Activated B cell treated with CpG ODN at 0.5 μM for 24 hours (primary cell): ENCODE measurements at regions of chr2 and their contacts with region 1.

Region 1: DNA sequence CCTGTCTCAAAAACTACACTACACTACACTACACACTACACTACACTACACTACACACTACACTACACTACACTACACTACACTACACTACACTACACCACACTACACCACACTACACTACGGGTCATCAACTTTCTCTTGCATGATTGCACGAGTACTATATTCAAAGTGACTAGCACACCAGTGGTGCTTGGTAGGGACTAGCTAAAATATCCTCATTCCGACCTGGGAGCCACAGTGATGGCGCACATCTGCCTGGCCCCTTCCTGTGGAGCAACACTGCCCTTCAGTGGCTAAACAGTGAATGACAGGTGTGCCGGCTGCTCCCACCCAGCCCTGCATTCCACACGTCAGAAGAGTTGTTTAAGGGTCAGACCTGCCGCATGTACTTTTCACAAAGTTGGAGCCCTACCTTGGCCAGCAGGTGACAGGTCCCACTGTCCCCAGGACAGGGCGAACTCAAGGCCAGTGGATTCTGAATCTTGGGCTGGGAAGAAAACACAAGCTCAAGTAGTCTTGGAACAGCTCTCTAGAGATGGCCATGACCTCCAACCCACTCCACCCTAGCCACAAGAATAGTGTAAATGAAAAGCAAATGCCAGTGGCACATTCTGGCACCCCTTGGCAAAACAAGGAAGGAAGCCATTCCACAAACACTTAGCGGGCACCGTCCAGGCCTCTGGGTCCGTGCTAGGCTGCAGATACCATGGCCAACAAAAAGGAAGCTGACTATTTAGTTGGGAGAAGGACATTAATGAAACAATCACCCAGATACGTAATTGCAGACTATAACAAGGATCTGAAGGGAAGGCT is 79.7 kb upstream of the MSH2 start:
- DNase-seq: peak; percentile 73
- ATAC-seq: peak; percentile 99
- H3K4me3 Mint-ChIP-seq: no peak overlapping the region
- H3K27ac Mint-ChIP-seq: no peak overlapping the region
- H3K4me1 Mint-ChIP-seq: peaks cover 8% of the 10 kb centered on the region
- H3K27me3 Mint-ChIP-seq: no peaks in the 10 kb centered on the region
- CTCF ChIP-seq: no peak

Region 2: DNA sequence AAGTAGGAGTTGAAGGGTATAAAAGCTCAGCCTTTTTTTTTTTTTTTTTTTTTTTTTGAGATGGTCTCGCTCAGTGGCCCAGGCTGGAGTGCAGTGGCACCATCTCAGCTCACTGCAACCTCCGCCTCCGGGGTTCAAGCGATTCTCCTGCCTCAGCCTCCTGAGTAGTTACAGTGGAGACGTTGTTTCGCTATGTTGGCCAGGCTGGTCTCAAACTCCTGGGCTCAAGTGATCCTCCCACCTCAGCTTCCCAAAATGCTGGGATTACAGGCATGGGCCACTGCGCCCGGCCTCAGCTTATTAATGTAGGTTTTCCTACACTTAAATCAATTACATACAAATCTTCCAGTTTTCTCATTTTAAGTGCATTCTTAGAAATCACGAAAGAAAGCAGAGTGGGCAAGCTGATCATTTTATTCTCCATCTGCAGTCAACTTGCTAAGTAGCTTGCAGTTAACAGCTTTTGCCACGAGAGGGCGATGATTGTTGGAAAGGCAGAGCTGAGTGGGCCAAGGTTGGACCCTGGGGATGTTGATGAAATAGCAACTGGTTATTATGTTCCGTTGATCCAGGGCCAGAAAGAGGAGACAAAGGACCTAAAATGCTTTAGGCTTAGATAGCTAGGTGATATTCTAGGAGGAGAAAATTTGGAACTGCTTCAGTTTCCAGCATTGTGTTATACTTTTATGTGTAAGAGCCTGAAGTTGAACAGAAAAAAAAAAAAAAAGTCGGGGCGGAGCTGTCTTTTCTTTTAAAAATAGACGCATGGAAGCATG is 1260.4 kb before region 1 on chr2:
- CTCF ChIA-PET with region 1: interaction called, 3 read pairs
- POLR2A ChIA-PET with region 1: no interaction called
- intact Hi-C with region 1: loop called (anchors 5 kb)
- DNase-seq: peak; percentile 30
- ATAC-seq: peak; percentile 70
- H3K4me3 Mint-ChIP-seq: no peak overlapping the region
- H3K27ac Mint-ChIP-seq: no peak overlapping the region
- H3K4me1 Mint-ChIP-seq: no peaks in the 10 kb centered on the region
- H3K27me3 Mint-ChIP-seq: no peaks in the 10 kb centered on the region
- CTCF ChIP-seq: peak; percentile 59

Region 3: DNA sequence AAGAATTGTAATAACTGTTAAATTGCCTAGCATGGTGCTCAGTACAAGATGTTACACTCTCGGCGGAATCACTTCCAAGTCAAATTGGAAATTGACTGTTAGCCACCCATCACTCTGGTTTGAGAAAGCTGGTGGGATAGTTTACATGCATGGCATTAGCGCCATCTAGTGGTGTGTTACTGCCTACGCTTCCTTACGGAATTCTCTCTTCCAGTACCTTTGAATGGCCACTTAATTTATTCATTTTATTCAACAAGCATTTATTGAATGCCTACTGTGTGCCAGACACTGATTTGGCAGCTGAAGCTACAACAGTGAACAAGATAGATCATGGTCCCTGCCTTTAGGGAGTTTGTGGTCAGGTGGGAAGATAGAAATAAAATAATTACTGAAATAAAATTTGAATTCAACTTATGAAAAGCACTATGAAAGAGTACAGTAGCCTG is 672.6 kb before region 1 on chr2:
- CTCF ChIA-PET with region 1: interaction called, 16 read pairs
- POLR2A ChIA-PET with region 1: no interaction called
- intact Hi-C with region 1: loop called (anchors 2 kb)
- DNase-seq: no peak
- ATAC-seq: peak; percentile 79
- H3K4me3 Mint-ChIP-seq: no peak overlapping the region
- H3K27ac Mint-ChIP-seq: no peak overlapping the region
- H3K4me1 Mint-ChIP-seq: no peaks in the 10 kb centered on the region
- H3K27me3 Mint-ChIP-seq: no peaks in the 10 kb centered on the region
- CTCF ChIP-seq: peak; percentile 83

Region 4: DNA sequence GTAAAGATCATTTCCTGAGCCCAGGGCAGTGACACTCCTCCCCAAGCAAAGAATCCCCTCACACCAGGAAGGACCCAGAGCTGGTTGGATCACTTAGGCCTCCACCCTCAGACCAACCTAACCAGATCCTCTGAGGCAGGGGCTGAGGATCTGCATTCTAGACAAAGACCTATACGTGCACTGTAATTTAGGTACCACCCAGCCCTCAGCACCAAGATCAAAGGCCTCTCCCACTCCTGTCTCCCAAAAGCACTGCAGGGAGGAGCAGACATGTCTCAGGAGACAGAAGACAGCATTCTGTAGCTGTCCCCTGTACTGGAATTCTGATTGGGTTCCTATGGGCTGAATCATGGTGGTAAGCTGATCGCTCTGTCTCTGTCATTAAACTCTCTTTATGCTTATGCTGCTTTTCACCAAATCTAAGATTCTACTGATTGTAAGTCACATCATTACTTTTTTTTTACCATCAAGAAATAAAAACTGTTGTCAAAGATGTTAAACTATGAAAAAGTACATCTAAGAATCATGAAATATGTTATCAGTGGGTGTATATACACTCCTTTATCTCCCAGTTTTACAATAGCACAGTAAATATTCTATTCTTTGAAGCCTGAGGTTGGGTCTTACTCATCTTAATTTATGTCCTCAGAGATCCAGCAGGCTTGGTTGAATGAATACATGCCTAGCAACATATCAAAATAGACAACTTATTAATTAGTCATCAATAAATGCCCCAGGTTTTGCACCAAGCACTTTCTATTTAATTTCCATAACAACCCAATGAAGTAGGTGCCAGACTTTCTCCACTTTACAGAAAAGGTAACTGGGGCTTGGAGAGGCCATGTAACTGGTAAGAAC is 436.0 kb before region 1 on chr2:
- CTCF ChIA-PET with region 1: interaction called, 12 read pairs
- POLR2A ChIA-PET with region 1: no interaction called
- intact Hi-C with region 1: no loop called
- DNase-seq: no peak
- ATAC-seq: no peak
- H3K4me3 Mint-ChIP-seq: no peak overlapping the region
- H3K27ac Mint-ChIP-seq: no peak overlapping the region
- H3K4me1 Mint-ChIP-seq: no peaks in the 10 kb centered on the region
- H3K27me3 Mint-ChIP-seq: no peaks in the 10 kb centered on the region
- CTCF ChIP-seq: no peak

Region 5: GRCh38 chr2:46964835-46965560 is 358.2 kb before region 1 on chr2:
- CTCF ChIA-PET with region 1: interaction called, 4 read pairs
- POLR2A ChIA-PET with region 1: no interaction called
- intact Hi-C with region 1: loop called (anchors 1 kb)
- DNase-seq: no peak
- ATAC-seq: no peak
- H3K4me3 Mint-ChIP-seq: no peak overlapping the region
- H3K27ac Mint-ChIP-seq: no peak overlapping the region
- H3K4me1 Mint-ChIP-seq: peaks cover 22% of the 10 kb centered on the region
- H3K27me3 Mint-ChIP-seq: no peaks in the 10 kb centered on the region
- CTCF ChIP-seq: no peak

Region 6: DNA sequence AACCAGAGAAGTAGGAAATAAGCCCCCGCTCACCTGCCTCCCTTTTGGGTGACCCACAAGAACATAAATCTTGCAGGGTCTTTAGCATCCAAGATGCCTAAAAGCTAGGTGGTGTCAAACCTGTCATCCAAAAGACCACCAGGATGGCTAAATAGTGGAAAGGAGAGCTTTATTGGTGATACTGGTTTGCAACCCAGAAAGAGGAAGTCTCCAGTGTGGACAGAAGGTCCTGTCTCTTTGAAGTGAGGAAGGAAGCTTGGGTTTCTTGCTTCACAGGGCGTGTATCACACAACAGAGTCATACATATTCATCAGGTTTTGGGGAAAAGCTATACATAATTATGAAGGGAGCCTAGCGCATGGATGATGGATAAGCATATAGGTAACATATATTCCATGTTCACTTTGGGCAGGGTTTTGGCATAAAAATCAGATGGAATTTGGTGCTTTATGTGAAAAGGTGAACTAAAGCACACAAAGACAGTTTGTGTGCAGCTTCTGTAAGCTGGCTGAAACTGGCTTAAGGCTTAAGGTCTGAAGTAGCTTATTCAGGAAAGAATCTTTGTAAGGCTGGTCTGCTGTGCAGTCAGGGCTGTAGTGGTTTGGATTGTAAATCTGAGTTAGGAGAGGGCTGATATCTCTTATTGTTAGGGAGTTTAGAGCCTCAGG is 22.5 kb before region 1 on chr2:
- CTCF ChIA-PET with region 1: interaction called, 14 read pairs
- POLR2A ChIA-PET with region 1: interaction called, 3 read pairs
- intact Hi-C with region 1: loop called (anchors 1 kb)
- DNase-seq: no peak
- ATAC-seq: peak; percentile 85
- H3K4me3 Mint-ChIP-seq: peak overlapping the region; percentile 61
- H3K27ac Mint-ChIP-seq: peak overlapping the region; percentile 66
- H3K4me1 Mint-ChIP-seq: peaks cover 36% of the 10 kb centered on the region
- H3K27me3 Mint-ChIP-seq: peaks cover 4% of the 10 kb centered on the region
- CTCF ChIP-seq: no peak